ENCODE measurements at regions of chr9 and their contacts with region 1.

Region 1: DNA sequence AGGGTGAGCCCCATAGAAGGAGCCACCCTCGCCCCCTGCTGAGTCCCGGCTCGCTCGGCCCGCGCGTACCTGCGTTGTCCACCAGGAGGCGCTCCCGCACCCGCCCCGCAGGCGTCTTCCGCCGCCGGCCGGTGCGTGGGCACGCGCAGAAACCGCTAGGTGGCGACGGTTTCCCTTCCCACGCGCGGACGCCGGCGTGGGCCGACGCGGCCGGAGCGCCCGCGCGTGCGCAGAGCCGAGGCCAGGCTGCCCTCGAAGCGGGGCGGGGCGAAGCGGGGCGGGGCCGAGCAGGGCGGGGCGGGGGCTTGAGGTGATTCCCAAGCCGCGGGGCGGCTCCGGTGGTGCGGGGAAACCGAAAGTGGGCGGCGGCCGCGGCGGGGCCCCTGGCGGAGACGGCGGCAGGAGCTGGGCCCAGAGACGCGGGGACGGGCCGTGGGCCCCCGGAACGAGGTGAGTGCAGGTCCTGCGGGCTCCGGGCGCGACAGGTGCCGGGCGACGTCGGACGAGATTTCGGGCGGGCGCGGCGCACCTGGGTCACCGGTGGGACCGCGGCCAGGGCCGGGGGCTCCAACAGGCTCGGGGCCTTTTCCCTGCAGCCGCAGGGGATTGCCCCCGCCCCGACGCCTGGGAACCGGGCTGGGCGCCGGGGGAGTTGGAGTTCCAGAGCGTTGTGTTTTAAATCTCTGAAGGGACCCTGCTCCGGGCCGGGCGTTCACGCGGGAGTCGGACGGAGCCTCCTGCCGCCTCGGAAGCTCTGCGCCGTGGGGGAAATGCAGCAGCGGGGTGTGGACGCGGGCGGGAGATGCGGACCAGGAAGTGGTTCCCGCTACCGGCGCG is at the start of gene TDRD7:
- DNase-seq: peak; percentile 86 to 97 (median 92)
- ATAC-seq: peak; percentile 88
- H3K4me3 ChIP-seq: peak within 1 kb of the TSS; percentile 62 to 77
- H3K4me3 Mint-ChIP-seq: peak within 1 kb of the TSS; percentile 86
- H3K27ac ChIP-seq: peak within 1 kb of the TSS; percentile 56 to 79
- H3K27ac Mint-ChIP-seq: peak within 1 kb of the TSS; percentile 85
- H3K4me1 ChIP-seq: peaks cover 13% of the 10 kb centered on the region
- H3K4me1 Mint-ChIP-seq: peaks cover 27% of the 10 kb centered on the region
- H3K27me3 ChIP-seq: no peaks in the 10 kb centered on the region
- H3K27me3 Mint-ChIP-seq: peaks cover 14% of the 10 kb centered on the region
- CTCF ChIP-seq: peak; percentile 96
- total RNA-seq, gene TDRD7: 3.5 to 4.5 TPM

Region 2: GRCh38 chr9:97237951-97238851 is 173.8 kb before region 1 on chr9:
- CTCF ChIA-PET with region 1: no interaction called
- POLR2A ChIA-PET with region 1: no interaction called
- intact Hi-C with region 1: loop called (anchors 5 to 10 kb)
- DNase-seq: peak; percentile 48 to 89 (median 77)
- ATAC-seq: peak; percentile 91
- H3K4me3 ChIP-seq: peak overlapping the region; percentile 59 to 89
- H3K4me3 Mint-ChIP-seq: peak overlapping the region; percentile 93
- H3K27ac ChIP-seq: peak overlapping the region; percentile 45 to 51
- H3K27ac Mint-ChIP-seq: peak overlapping the region; percentile 95
- H3K4me1 ChIP-seq: peaks cover 14% of the 10 kb centered on the region
- H3K4me1 Mint-ChIP-seq: peaks cover 32% of the 10 kb centered on the region
- H3K27me3 ChIP-seq: no peaks in the 10 kb centered on the region
- H3K27me3 Mint-ChIP-seq: no peaks in the 10 kb centered on the region
- CTCF ChIP-seq: no peak

Region 3: GRCh38 chr9:97598461-97599288 is 186.7 kb after region 1 on chr9:
- CTCF ChIA-PET with region 1: interaction called, 40 read pairs
- POLR2A ChIA-PET with region 1: interaction called, 4 read pairs
- intact Hi-C with region 1: loop called (anchors 1 kb)
- DNase-seq: peak; percentile 46 to 84 (median 72)
- ATAC-seq: peak; percentile 97
- H3K4me3 ChIP-seq: no peak overlapping the region
- H3K4me3 Mint-ChIP-seq: peak overlapping the region; percentile 59
- H3K27ac ChIP-seq: no peak overlapping the region
- H3K27ac Mint-ChIP-seq: no peak overlapping the region
- H3K4me1 ChIP-seq: no peaks in the 10 kb centered on the region
- H3K4me1 Mint-ChIP-seq: peaks cover 7% of the 10 kb centered on the region
- H3K27me3 ChIP-seq: no peaks in the 10 kb centered on the region
- H3K27me3 Mint-ChIP-seq: no peaks in the 10 kb centered on the region
- CTCF ChIP-seq: peak; percentile 77

Region 4: DNA sequence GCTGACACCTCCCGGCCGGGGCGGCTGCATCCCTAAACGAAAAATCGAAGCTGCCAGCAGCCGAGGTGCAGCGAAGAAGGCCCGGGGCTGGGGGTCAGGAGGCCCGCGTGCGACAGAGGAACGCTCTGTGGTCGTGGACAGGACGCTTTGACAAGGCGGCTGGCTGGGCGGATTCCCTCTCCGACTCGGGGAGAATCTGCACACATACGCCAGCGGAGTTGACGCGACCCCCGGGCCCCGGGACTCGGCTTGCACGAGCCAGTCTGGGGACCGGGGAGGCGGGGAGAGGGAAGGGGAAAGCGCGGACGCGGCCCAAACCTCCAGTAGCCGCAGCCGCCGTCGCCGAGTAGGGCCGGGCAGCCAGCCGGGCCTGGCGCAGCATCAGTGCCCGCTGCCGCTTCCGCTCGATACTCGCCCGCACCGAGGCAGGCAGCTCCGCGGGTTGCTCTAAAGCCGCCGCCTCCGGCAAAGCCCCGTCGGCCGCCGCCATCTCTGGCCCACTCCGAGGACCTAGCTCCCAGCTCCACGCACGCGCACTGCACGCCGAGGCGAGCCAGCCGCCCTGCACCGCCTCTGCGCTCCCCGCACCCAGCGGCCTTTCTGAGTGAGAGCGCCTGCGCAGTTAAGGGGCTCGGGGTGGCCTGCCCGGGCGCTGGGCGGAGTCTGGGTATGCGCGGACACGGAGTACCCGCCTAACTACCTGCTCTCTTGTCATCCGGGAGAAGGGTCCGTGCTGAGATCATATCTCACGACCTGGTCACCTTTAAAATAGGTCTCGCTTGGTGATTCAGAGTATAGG is 285.0 kb after region 1 on chr9 and contains the start of gene XPA:
- CTCF ChIA-PET with region 1: no interaction called
- POLR2A ChIA-PET with region 1: no interaction called
- intact Hi-C with region 1: loop called in 1 of 2 experiments (anchors 5 kb)
- DNase-seq: peak; percentile 90 to 99 (median 97)
- ATAC-seq: peak; percentile 94
- H3K4me3 ChIP-seq: peak within 1 kb of the TSS; percentile 68 to 79
- H3K4me3 Mint-ChIP-seq: peak within 1 kb of the TSS; percentile 83
- H3K27ac ChIP-seq: peak within 1 kb of the TSS; percentile 60 to 79
- H3K27ac Mint-ChIP-seq: peak within 1 kb of the TSS; percentile 92
- H3K4me1 ChIP-seq: peaks cover 39% of the 10 kb centered on the region
- H3K4me1 Mint-ChIP-seq: peaks cover 53% of the 10 kb centered on the region
- H3K27me3 ChIP-seq: no peaks in the 10 kb centered on the region
- H3K27me3 Mint-ChIP-seq: peaks cover 4% of the 10 kb centered on the region
- CTCF ChIP-seq: no peak
- total RNA-seq, gene XPA: 21.1 to 24.9 TPM